Common myeloid progenitor, CD34-positive (primary cell): ENCODE measurements at regions of chr2 and their contacts with region 1.

Region 1: GRCh38 chr2:60745761-60746160 is 10.3 kb upstream of the PAPOLG start:
- DNase-seq: peak in 2 of 3 donors; percentile 68 to 74
- H3K4me3 ChIP-seq: peak overlapping the region in 3 of 7 experiments; percentile 28 to 39 (median 37)
- H3K27ac ChIP-seq: no peak overlapping the region
- H3K4me1 ChIP-seq: peaks cover 0 to 29% (median 23%) of the 10 kb centered on the region in 4 experiments
- H3K27me3 ChIP-seq: no peaks in the 10 kb centered on the region

Region 2: DNA sequence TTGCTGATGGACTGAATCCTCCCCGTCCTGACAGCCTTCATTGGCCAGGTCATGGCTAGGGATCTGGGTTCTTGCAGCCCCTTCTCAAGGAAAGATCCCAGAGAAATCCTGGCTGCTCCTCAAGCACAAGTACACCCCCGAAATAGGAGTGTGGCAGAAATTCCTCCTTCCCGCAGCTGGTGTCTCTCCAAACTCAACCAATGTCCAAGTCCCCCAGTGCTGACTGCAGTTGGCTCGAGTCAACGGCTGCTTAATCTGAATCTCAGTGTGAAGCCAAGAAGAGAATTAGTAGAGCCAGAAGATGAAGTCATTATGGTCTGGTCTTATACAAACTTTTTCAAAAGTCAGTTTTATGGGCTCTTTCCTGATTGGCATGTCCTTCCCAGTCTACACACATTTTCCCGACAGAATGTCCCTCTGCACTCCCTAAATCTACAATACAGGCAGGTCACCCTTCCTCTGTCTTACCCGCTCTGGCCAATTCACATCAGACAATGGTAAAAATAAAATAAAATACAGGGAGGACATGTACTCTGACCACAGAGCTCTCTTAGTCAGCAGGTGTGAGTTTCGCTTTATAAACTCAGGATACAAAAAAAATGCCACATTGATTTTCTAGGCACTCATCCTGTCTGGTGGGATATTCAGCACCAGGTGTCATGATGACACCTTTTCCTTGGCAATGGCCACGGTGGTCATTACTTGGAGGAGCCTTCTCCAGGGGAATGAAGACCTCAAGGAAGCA is 66.6 kb before region 1 on chr2:
- CTCF ChIA-PET with region 1: no interaction called
- POLR2A ChIA-PET with region 1: no interaction called
- DNase-seq: no peak
- H3K4me3 ChIP-seq: no peak overlapping the region
- H3K27ac ChIP-seq: no peak overlapping the region
- H3K4me1 ChIP-seq: peaks cover 3 to 21% (median 14%) of the 10 kb centered on the region in 4 experiments
- H3K27me3 ChIP-seq: no peaks in the 10 kb centered on the region

Region 3: DNA sequence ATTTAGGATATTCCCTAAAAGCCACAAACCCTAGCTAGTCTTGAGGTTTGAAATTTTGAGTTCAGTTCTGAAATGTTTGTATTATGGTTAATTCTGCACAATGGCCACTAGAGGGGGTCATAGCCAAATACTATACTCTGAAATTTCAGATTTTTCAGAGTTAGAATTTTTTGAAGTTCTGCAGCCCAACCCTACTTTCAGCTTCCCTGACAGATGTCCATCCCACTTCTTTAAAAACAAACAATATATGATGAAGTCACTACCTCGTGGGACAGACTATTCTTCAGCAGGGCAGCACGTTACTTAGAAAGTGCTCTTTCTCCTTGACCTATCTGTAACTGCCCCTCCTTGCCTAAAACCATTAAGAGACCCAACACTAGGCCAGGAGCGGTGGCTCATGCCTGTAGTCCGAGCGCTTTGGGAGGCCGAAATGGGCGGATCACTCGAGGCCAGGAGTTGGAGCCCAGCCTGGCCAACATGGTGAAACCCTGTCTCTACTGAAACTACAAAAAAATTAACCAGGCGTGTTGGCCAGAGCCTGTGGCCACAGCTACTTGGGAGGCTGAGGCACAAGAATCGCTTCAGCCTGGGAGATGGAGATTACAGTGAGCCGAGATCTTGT is 37.9 kb before region 1 on chr2:
- CTCF ChIA-PET with region 1: interaction called, 24 read pairs
- POLR2A ChIA-PET with region 1: no interaction called
- DNase-seq: peak; percentile 26 to 62 (median 54)
- H3K4me3 ChIP-seq: no peak overlapping the region
- H3K27ac ChIP-seq: no peak overlapping the region
- H3K4me1 ChIP-seq: peaks cover 0 to 8% (median 0%) of the 10 kb centered on the region in 4 experiments
- H3K27me3 ChIP-seq: no peaks in the 10 kb centered on the region

Region 4: GRCh38 chr2:60756191-60757041 is 10.7 kb after region 1 on chr2 and contains the start of gene PAPOLG:
- CTCF ChIA-PET with region 1: interaction called, 12 read pairs
- POLR2A ChIA-PET with region 1: interaction called, 7 read pairs
- DNase-seq: peak; percentile 92 to 94 (median 94)
- H3K4me3 ChIP-seq: peak within 1 kb of the TSS; percentile 68 to 99 (median 96)
- H3K27ac ChIP-seq: peak within 1 kb of the TSS; percentile 67 to 90
- H3K4me1 ChIP-seq: peaks cover 5 to 16% (median 15%) of the 10 kb centered on the region in 4 experiments
- H3K27me3 ChIP-seq: no peaks in the 10 kb centered on the region

Region 5: DNA sequence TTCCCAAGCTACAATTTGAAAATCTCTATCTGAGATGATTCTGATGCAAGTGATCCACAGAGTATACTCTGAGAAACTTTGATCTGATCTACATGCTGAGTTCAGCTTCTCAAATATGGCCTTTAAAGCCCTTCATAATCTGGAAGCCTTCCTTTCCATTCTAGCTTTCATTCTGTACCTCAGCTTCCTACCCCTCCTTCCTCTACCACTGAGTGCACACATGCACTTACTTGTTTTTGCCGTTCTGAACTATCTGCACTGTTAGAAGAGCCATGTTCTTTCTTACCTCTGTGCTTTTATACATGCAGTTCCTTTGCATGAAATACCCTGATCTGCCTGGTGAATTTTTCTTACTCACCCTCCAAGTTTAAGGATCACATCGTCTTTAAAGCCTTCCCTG is 160.6 kb after region 1 on chr2:
- CTCF ChIA-PET with region 1: no interaction called
- POLR2A ChIA-PET with region 1: no interaction called
- DNase-seq: peak in 1 of 3 donors; percentile 23
- H3K4me3 ChIP-seq: no peak overlapping the region
- H3K27ac ChIP-seq: no peak overlapping the region
- H3K4me1 ChIP-seq: no peaks in the 10 kb centered on the region
- H3K27me3 ChIP-seq: no peaks in the 10 kb centered on the region

Region 6: DNA sequence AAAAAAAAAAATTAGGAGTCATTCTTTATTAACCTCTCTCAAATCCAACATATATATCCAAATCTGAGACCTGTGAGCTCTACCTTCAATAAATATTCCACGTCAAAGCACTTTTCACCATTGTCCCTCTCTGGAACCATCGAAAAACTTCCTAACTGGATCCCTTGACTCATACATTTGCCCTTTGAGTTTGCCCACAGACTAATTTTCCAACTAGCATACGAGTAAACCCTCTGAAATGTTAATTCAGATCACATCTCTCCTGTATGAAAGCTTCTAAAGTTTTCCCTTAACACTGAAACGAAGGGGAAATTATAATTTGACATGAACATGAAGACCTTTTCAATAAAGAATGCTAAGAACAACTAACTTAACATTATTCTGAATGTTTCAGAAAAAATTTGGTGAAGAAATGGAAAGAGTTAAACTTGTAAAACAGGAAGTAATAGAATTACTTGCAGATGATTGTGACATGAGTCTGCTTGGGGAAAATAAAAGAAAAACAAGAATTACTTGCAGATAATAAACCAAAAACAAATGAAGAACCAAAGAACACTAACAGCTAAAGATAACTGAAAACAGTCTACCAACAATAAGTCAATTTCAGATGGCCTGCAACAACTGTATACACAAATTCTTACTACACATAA is 526.8 kb after region 1 on chr2:
- CTCF ChIA-PET with region 1: no interaction called
- POLR2A ChIA-PET with region 1: no interaction called
- DNase-seq: peak in 2 of 3 donors; percentile 14 to 24
- H3K4me3 ChIP-seq: no peak overlapping the region
- H3K27ac ChIP-seq: no peak overlapping the region
- H3K4me1 ChIP-seq: peaks cover 0 to 6% (median 0%) of the 10 kb centered on the region in 4 experiments
- H3K27me3 ChIP-seq: no peaks in the 10 kb centered on the region